Thyroid gland (tissue), 4 donors: ENCODE measurements at regions of chr5 and their contacts with region 1.

Region 1: DNA sequence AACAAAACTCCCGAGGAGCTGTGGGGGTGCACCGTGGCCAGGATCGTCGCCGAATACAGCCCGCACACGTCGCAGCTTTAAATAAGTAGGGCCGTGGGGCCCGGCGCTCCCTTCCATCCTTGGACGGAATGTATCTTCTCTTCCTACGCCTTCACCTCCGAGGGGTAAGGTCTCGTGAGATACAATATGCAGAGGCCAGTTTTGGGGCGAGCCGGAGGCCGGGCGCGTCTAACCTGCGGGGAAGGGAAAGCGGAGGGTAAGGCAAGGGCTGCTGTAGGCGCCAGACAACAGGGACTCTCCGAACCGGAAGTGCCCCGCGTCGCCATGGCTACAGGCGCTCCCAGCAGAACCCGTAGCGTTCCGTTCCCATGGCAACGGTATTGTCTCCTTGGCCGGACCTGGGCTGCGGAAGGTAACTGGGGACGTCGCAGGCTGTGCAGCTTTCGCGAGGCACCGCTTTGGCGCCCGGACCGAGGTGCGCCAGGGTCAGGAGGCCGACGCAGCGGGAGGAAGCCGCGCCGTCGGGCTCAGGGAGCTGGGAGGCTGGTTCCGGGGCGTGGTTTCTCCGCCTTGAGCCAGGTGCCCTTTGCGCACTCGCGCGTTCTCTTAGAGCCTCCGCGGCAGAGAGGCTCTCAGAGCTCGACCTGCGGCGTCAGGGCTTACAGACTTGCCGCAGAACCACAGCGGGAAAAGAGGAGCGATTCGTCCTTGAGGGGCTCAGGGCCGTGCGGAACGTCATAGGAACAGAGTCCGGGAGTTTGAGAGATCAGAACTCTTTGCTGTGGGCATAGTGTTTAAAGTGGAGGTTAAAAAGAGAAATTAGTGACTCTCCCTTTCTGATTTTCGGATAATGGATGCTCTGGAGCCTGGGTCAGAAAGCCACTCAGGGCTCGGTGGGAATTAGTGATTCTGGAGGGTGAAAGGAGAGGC is at the start of gene TTC23L:
- DNase-seq: peak; percentile 91 to 93
- H3K4me3 ChIP-seq: peak within 1 kb of the TSS; percentile 56 to 89 (median 78)
- H3K27ac ChIP-seq: peak within 1 kb of the TSS; percentile 43 to 73 (median 57)
- H3K4me1 ChIP-seq: peaks cover 0 to 5% of the 10 kb centered on the region in 2 donors
- H3K27me3 ChIP-seq: no peaks in the 10 kb centered on the region
- CTCF ChIP-seq: no peak
- POLR2A ChIP-seq: peak in 1 of 2 donors; percentile 82
- total RNA-seq, gene TTC23L: 0.45 to 7.1 (median 0.75) TPM

Region 2: DNA sequence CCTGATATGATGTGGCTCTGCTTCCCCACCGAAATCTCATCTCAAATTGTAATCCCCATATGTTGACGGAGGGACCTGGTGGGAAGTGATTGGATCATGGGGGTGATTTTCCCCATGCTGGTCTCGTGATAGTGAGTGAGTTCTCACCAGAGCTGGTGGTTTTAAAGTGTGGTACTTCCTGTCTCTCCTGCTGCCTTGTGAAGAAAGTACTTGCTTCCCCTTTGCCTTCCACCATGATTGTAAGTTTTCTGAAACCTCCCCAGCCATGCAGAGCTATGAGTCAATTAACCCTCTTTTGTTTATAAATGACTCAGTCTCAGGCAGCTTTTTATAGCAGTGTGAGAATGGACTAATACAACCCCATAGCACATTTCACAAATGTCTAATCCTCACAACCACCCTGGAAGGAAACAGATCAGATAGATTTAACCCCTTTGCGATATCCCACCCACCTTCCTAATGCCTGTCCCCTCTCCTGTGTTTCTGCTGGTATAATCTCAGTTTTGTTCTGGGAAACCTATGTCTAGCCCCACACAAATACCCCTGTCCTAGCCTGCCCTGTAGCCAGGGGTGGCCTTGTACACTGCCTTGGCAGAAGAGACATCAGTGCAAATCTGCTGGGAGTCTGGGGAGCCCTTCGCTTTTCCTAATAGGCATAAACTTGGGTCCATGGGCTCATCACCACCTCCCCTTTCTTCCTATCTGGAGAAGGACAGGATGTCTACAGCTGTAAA is 339.9 kb before region 1 on chr5:
- intact Hi-C with region 1: no loop called
- DNase-seq: no peak
- H3K4me3 ChIP-seq: no peak overlapping the region
- H3K27ac ChIP-seq: no peak overlapping the region
- H3K4me1 ChIP-seq: no peaks in the 10 kb centered on the region
- H3K27me3 ChIP-seq: no peaks in the 10 kb centered on the region
- CTCF ChIP-seq: no peak
- POLR2A ChIP-seq: no peak

Region 3: GRCh38 chr5:34522599-34523386 is 316.3 kb before region 1 on chr5:
- intact Hi-C with region 1: loop called (anchors 10 kb)
- DNase-seq: peak; percentile 73 to 79
- H3K4me3 ChIP-seq: no peak overlapping the region
- H3K27ac ChIP-seq: no peak overlapping the region
- H3K4me1 ChIP-seq: no peaks in the 10 kb centered on the region
- H3K27me3 ChIP-seq: no peaks in the 10 kb centered on the region
- CTCF ChIP-seq: peak; percentile 29 to 77 (median 66)
- POLR2A ChIP-seq: no peak